ENCODE measurements at regions of chr3 and their contacts with region 1.

Region 1: DNA sequence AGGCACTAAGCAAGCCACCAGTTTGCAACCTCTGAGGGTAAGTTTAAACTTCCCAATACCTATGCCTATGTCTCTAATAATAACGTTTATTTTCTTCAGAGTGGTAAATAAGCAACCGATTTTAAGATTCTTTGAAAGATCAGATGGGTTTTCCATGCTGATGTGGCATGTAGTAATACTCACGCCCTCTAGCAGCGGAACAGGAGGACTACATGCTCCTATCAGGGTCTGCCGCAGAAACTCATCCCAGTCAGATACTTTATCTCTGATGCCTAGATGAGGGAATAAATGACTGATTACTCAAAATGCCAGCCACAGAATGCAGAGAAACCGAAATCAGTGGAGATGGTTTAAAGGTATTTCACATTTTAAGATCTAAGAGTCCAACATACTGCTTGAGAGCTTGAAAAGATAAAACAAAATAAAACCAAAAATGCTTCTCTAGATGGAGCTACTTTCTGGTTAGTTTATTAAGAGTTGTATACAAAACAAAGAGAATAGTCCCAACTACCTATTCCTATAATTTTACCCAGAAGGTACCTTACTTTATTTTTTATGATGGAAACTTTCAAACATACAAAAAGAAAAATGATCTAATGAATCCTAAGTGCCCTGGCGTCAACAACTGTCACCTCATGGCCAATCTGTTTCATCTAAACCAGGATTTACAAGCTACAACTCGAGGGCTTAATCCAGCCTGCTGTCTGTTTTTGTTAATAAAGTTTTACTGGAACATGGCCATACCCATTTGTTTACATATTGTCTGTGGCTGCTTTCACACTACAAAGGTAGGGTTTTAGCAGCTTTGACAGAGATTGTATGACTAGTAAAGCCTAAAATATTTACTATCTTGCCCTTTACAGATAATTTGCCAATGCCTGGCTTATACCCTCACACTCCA is 37.5 kb upstream of the STIMATE start:
- DNase-seq: peak; percentile 64
- ATAC-seq: peak; percentile 97
- H3K4me3 ChIP-seq: no peak overlapping the region
- H3K27ac ChIP-seq: no peak overlapping the region
- H3K4me1 ChIP-seq: no peaks in the 10 kb centered on the region
- H3K27me3 ChIP-seq: no peaks in the 10 kb centered on the region
- CTCF ChIP-seq: peak; percentile 71
- POLR2A ChIP-seq: no peak
- RAD21 ChIP-seq: peak; percentile 66

Region 2: DNA sequence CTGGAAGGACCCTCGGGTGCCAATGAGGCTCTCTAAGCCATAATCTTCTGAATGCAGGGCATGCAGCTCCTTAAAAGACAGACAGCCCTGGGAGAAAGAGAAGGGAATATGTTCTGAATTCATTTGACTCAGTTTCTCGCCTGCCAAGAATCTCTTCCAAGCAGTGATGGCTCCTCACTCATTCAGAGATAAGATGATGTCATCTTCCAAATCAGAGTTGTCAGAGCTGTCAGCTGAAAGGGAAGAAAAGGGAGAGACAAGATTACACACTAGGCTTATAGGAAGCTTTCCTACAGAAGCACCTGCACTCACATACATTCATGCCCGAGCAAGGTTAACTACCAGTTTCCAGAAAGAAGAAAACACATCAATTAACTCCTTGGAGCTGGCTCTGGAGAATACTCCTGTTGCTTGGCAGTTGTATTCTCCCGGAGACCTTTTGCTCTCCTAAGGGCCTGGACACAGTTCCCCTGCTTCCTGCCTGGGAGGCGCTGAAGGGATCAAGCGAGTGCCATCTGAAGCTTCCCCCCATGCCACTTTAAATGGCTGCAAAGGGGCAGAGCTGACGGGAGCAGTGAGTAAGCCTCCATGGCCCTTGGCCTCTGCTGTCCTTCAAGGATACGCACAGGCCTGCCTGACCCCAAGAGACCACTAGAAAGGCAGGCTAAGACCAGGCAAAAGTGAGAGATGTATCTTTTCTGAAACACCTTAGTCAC is 1536.1 kb before region 1 on chr3:
- CTCF ChIA-PET with region 1: no interaction called
- POLR2A ChIA-PET with region 1: interaction called, 19 read pairs
- dilution Hi-C with region 1: no loop called
- in situ Hi-C with region 1: no loop called
- intact Hi-C with region 1: no loop called
- DNase-seq: no peak
- ATAC-seq: no peak
- H3K4me3 ChIP-seq: no peak overlapping the region
- H3K27ac ChIP-seq: no peak overlapping the region
- H3K4me1 ChIP-seq: peaks cover 8% of the 10 kb centered on the region
- H3K27me3 ChIP-seq: no peaks in the 10 kb centered on the region
- CTCF ChIP-seq: no peak
- POLR2A ChIP-seq: no peak
- RAD21 ChIP-seq: no peak

Region 3: GRCh38 chr3:52076896-52077780 is 857.7 kb before region 1 on chr3:
- CTCF ChIA-PET with region 1: no interaction called
- POLR2A ChIA-PET with region 1: no interaction called
- dilution Hi-C with region 1: no loop called
- in situ Hi-C with region 1: no loop called
- intact Hi-C with region 1: no loop called
- DNase-seq: no peak
- ATAC-seq: no peak
- H3K4me3 ChIP-seq: no peak overlapping the region
- H3K27ac ChIP-seq: no peak overlapping the region
- H3K4me1 ChIP-seq: peaks cover 3% of the 10 kb centered on the region; the same call in 1 of the 2 replicates
- H3K27me3 ChIP-seq: no peaks in the 10 kb centered on the region
- CTCF ChIP-seq: no peak
- POLR2A ChIP-seq: no peak
- RAD21 ChIP-seq: no peak

Region 4: GRCh38 chr3:52770496-52771333 is 164.2 kb before region 1 on chr3 and contains the start of gene NEK4:
- CTCF ChIA-PET with region 1: no interaction called
- POLR2A ChIA-PET with region 1: no interaction called
- dilution Hi-C with region 1: no loop called
- in situ Hi-C with region 1: no loop called
- intact Hi-C with region 1: loop called (anchors 2 kb)
- DNase-seq: peak; percentile 85
- ATAC-seq: peak; percentile 100
- H3K4me3 ChIP-seq: peak within 1 kb of the TSS; percentile 71
- H3K27ac ChIP-seq: peak within 1 kb of the TSS; percentile 80
- H3K4me1 ChIP-seq: no peaks in the 10 kb centered on the region
- H3K27me3 ChIP-seq: peaks cover 4% of the 10 kb centered on the region; the same call in 1 of the 2 replicates
- CTCF ChIP-seq: no peak
- POLR2A ChIP-seq: peak; percentile 70; the same call in 1 of the 2 replicates
- RAD21 ChIP-seq: no peak; the same call in 1 of the 2 replicates
- total RNA-seq, gene NEK4: 16.9 and 24.7 TPM in 2 replicates